CD4-positive, alpha-beta T cell (primary cell): ENCODE measurements at regions of chr1 and their contacts with region 1.

Region 1: DNA sequence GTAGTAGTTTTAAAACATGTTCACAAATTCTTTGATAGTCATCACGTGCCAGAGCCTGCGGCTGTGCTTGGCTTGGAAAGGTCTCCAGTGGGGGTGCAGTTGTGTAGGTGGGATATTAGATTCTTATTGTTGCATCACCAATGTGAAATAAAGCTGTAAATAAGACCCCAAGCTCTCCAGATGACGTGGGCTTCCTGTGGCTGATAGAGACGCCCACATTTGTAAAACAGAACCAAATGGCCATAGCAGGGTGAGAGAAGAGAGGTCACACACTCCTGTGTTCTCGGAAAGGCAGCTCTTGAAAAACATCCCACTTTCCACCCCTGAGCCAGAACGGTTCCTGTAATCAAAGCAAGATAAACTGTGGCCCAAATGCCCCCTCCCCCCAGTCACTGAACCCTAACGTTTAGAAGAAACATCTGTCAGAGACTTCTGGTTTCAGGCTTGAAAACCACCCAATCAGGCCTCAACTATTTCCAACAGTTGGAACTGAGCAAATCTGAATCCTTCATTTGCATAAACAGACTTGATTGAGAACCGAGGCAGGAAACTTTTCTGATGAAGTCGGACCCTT is 6.6 kb upstream of the NTPCR start:
- DNase-seq: no peak
- ATAC-seq: no peak
- H3K4me3 ChIP-seq: no peak overlapping the region
- H3K4me3 Mint-ChIP-seq: peak overlapping the region; percentile 26
- H3K27ac ChIP-seq: no peak overlapping the region
- H3K27ac Mint-ChIP-seq: peak overlapping the region; percentile 60
- H3K4me1 ChIP-seq: peaks cover 14% of the 10 kb centered on the region
- H3K4me1 Mint-ChIP-seq: peaks cover 25% of the 10 kb centered on the region
- H3K27me3 ChIP-seq: no peaks in the 10 kb centered on the region
- H3K27me3 Mint-ChIP-seq: no peaks in the 10 kb centered on the region
- CTCF ChIP-seq: no peak

Region 2: GRCh38 chr1:232793944-232794343 is 149.8 kb before region 1 on chr1:
- CTCF ChIA-PET with region 1: no interaction called
- POLR2A ChIA-PET with region 1: no interaction called
- intact Hi-C with region 1: no loop called
- DNase-seq: peak in 6 of 14 experiments; percentile 5 to 46 (median 35)
- ATAC-seq: peak; percentile 76
- H3K4me3 ChIP-seq: no peak overlapping the region
- H3K4me3 Mint-ChIP-seq: no peak overlapping the region
- H3K27ac ChIP-seq: no peak overlapping the region
- H3K27ac Mint-ChIP-seq: peak overlapping the region; percentile 47
- H3K4me1 ChIP-seq: peaks cover 12% of the 10 kb centered on the region
- H3K4me1 Mint-ChIP-seq: peaks cover 23% of the 10 kb centered on the region
- H3K27me3 ChIP-seq: no peaks in the 10 kb centered on the region
- H3K27me3 Mint-ChIP-seq: peaks cover 2% of the 10 kb centered on the region
- CTCF ChIP-seq: peak; percentile 33

Region 3: DNA sequence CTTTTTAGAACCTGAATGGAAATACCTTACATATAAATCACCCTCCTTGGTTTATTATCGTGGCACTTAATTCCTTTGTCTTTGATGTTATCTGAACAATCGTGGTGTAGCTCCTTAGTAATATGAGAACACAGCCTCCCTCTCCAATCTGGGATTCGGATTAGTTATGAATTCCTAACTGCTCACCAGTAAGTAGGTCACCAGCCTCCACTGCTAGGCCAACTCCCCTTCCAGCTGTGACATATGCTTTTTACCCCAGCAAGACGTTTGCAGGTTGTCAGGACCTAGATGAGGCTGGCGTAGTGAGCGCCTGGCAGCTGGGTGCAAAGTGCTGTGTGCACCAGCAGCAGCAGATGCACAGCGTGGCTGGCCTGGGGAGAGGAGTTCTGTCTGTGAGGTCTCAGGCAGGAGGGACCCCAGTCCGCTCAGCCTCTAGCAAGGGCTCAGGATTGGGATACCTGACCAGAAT is 44.8 kb after region 1 on chr1:
- CTCF ChIA-PET with region 1: no interaction called
- POLR2A ChIA-PET with region 1: no interaction called
- intact Hi-C with region 1: no loop called
- DNase-seq: no peak
- ATAC-seq: no peak
- H3K4me3 ChIP-seq: no peak overlapping the region
- H3K4me3 Mint-ChIP-seq: no peak overlapping the region
- H3K27ac ChIP-seq: no peak overlapping the region
- H3K27ac Mint-ChIP-seq: no peak overlapping the region
- H3K4me1 ChIP-seq: no peaks in the 10 kb centered on the region
- H3K4me1 Mint-ChIP-seq: no peaks in the 10 kb centered on the region
- H3K27me3 ChIP-seq: no peaks in the 10 kb centered on the region
- H3K27me3 Mint-ChIP-seq: no peaks in the 10 kb centered on the region
- CTCF ChIP-seq: no peak

Region 4: GRCh38 chr1:233281711-233282581 is 338.2 kb after region 1 on chr1:
- CTCF ChIA-PET with region 1: no interaction called
- POLR2A ChIA-PET with region 1: no interaction called
- intact Hi-C with region 1: loop called in 1 of 2 experiments (anchors 10 kb)
- DNase-seq: peak in 8 of 14 experiments; percentile 6 to 62 (median 31)
- ATAC-seq: peak; percentile 82
- H3K4me3 ChIP-seq: no peak overlapping the region
- H3K4me3 Mint-ChIP-seq: peak overlapping the region; percentile 43
- H3K27ac ChIP-seq: peak overlapping the region in 1 of 2 donors; percentile 25
- H3K27ac Mint-ChIP-seq: peak overlapping the region; percentile 75
- H3K4me1 ChIP-seq: peaks cover 22% of the 10 kb centered on the region
- H3K4me1 Mint-ChIP-seq: peaks cover 54% of the 10 kb centered on the region
- H3K27me3 ChIP-seq: no peaks in the 10 kb centered on the region
- H3K27me3 Mint-ChIP-seq: no peaks in the 10 kb centered on the region
- CTCF ChIP-seq: no peak

Region 5: GRCh38 chr1:233326811-233327650 is 383.3 kb after region 1 on chr1:
- CTCF ChIA-PET with region 1: no interaction called
- POLR2A ChIA-PET with region 1: no interaction called
- intact Hi-C with region 1: loop called in 1 of 2 experiments (anchors 10 kb)
- DNase-seq: peak; percentile 72 to 98 (median 85)
- ATAC-seq: peak; percentile 92
- H3K4me3 ChIP-seq: peak overlapping the region; percentile 49
- H3K4me3 Mint-ChIP-seq: peak overlapping the region; percentile 94
- H3K27ac ChIP-seq: peak overlapping the region in 1 of 2 donors; percentile 30
- H3K27ac Mint-ChIP-seq: peak overlapping the region; percentile 77
- H3K4me1 ChIP-seq: peaks cover 13% of the 10 kb centered on the region
- H3K4me1 Mint-ChIP-seq: peaks cover 11% of the 10 kb centered on the region
- H3K27me3 ChIP-seq: no peaks in the 10 kb centered on the region
- H3K27me3 Mint-ChIP-seq: peaks cover 3% of the 10 kb centered on the region
- CTCF ChIP-seq: no peak